ENCODE measurements at regions of chr15 and their contacts with region 1.

Region 1: GRCh38 chr15:64681424-64682024 is 93.9 kb downstream of the RBPMS2 start:
- DNase-seq: no peak
- ATAC-seq: peak; percentile 46
- H3K4me3 ChIP-seq: no peak overlapping the region
- H3K4me3 Mint-ChIP-seq: peak overlapping the region in 1 of 10 donors; percentile 53
- H3K27ac ChIP-seq: no peak overlapping the region
- H3K27ac Mint-ChIP-seq: peak overlapping the region in 6 of 9 donors; percentile 34 to 78 (median 61)
- H3K4me1 ChIP-seq: no peaks in the 10 kb centered on the region
- H3K4me1 Mint-ChIP-seq: peaks cover 0 to 31% (median 4%) of the 10 kb centered on the region in 7 donors
- H3K27me3 ChIP-seq: no peaks in the 10 kb centered on the region
- H3K27me3 Mint-ChIP-seq: no peaks in the 10 kb centered on the region

Region 2: GRCh38 chr15:64209680-64210334 is 471.7 kb before region 1 on chr15:
- CTCF ChIA-PET with region 1: no interaction called
- POLR2A ChIA-PET with region 1: no interaction called
- intact Hi-C with region 1: loop called (anchors 2 to 10 kb)
- DNase-seq: peak in 3 of 9 donors; percentile 0 to 19 (median 11)
- ATAC-seq: no peak
- H3K4me3 ChIP-seq: no peak overlapping the region
- H3K4me3 Mint-ChIP-seq: no peak overlapping the region
- H3K27ac ChIP-seq: no peak overlapping the region
- H3K27ac Mint-ChIP-seq: peak overlapping the region in 1 of 9 donors; percentile 41
- H3K4me1 ChIP-seq: no peaks in the 10 kb centered on the region
- H3K4me1 Mint-ChIP-seq: peaks cover 0 to 10% (median 0%) of the 10 kb centered on the region in 7 donors
- H3K27me3 ChIP-seq: no peaks in the 10 kb centered on the region
- H3K27me3 Mint-ChIP-seq: no peaks in the 10 kb centered on the region

Region 3: DNA sequence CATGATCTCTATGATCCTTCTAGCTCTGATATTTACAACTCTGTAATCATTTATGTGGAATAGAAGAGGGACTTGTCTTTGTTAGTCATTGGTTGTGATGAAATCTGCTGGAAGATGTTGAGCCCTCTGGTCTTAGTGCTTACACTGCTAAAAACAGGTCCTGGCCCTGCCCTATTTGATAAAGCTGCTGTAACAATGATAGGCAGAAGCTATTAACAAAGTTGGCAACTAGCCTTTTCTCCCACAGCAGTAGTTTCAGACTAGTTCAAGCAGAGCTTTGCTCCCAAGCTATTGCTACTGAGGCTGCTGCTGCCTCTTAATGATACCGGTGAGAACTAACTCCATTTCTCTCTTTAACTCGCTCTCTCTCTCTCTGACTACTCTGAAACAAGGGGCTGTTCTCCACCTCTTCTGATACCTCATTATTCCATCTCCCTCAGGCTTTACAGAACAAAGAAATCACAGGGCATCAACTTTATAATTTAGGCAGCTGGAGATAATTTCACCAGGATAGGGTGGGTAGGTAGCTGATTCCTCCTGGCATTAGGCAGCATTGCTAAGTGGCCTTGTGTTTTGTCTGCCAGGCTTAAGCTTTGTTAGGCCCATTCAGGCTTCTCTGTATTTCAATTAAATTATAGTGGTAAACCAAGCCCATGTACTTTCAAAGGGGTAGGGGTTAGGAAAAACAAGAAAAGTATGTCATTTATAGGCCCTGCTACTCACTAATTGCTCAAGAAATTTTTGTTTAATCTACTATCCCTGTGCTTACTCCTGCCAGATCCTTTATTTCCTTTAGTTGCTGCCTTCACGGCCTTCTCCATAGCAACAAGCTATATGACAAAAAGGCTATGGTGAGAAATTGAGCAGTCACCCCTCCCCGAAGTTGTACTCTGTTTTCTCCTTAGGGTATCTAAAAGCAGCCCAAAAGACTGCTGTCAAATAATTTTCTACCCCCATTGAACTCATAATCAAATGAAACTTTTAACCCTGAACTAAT is 45.7 kb before region 1 on chr15:
- CTCF ChIA-PET with region 1: no interaction called
- POLR2A ChIA-PET with region 1: no interaction called
- intact Hi-C with region 1: no loop called
- DNase-seq: no peak
- ATAC-seq: peak; percentile 25
- H3K4me3 ChIP-seq: no peak overlapping the region
- H3K4me3 Mint-ChIP-seq: peak overlapping the region; percentile 8 to 73 (median 52)
- H3K27ac ChIP-seq: peak overlapping the region; percentile 15
- H3K27ac Mint-ChIP-seq: peak overlapping the region; percentile 13 to 86 (median 82)
- H3K4me1 ChIP-seq: peaks cover 55 to 59% of the 10 kb centered on the region in 2 donors
- H3K4me1 Mint-ChIP-seq: peaks cover 55 to 86% (median 72%) of the 10 kb centered on the region in 7 donors
- H3K27me3 ChIP-seq: no peaks in the 10 kb centered on the region
- H3K27me3 Mint-ChIP-seq: no peaks in the 10 kb centered on the region

Region 4: GRCh38 chr15:64667736-64668161 is 13.8 kb before region 1 on chr15:
- CTCF ChIA-PET with region 1: interaction called, 5 read pairs
- POLR2A ChIA-PET with region 1: no interaction called
- intact Hi-C with region 1: loop called in 1 of 2 experiments (anchors 1 kb)
- DNase-seq: no peak
- ATAC-seq: no peak
- H3K4me3 ChIP-seq: no peak overlapping the region
- H3K4me3 Mint-ChIP-seq: no peak overlapping the region
- H3K27ac ChIP-seq: no peak overlapping the region
- H3K27ac Mint-ChIP-seq: peak overlapping the region in 8 of 9 donors; percentile 12 to 84 (median 67)
- H3K4me1 ChIP-seq: no peaks in the 10 kb centered on the region
- H3K4me1 Mint-ChIP-seq: peaks cover 8 to 36% (median 22%) of the 10 kb centered on the region in 7 donors
- H3K27me3 ChIP-seq: no peaks in the 10 kb centered on the region
- H3K27me3 Mint-ChIP-seq: no peaks in the 10 kb centered on the region

Region 5: DNA sequence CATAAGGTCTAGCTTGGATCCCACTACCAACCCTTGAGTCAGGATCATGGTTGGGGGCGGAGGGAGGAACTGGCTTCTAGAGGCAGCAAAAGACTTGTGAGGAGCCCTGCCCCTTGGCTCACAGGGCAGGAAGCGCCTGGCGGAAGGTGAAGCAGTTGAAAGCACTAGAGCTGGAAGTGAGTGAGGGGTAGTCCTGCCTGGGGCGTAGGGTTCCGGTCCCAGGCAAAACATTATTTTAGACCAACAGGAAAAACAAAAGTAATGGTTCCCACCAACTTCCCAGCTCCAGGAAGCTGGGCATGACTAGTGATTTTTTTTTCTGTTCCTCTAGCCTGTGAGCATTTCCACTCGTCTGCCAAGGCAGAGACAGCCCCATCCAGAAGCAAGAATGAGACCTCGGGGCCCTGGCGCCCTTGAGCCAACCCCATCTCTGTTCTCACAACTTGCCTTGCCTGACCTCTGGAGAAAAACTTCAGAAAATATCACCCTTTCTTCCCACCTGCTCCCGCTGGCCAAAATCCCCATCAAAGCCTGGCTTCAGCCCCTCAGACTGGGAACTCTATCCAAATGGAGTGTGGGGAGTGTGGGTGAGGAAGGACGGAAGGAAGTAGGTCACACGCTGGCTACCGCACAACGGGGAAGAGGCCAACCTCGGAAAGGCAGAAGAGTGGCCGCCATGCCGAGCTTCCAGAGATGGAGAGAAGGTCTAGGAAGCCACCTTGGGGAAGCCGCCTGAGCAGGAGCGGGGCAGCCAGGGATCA is 36.4 kb after region 1 on chr15:
- CTCF ChIA-PET with region 1: interaction called, 19 read pairs
- POLR2A ChIA-PET with region 1: interaction called, 3 read pairs
- intact Hi-C with region 1: no loop called
- DNase-seq: peak in 6 of 9 donors; percentile 20 to 54 (median 36)
- ATAC-seq: peak; percentile 60
- H3K4me3 ChIP-seq: no peak overlapping the region
- H3K4me3 Mint-ChIP-seq: peak overlapping the region in 9 of 10 donors; percentile 3 to 65 (median 45)
- H3K27ac ChIP-seq: peak overlapping the region; percentile 55
- H3K27ac Mint-ChIP-seq: peak overlapping the region in 8 of 9 donors; percentile 81 to 92 (median 88)
- H3K4me1 ChIP-seq: peaks cover 0 to 21% of the 10 kb centered on the region in 2 donors
- H3K4me1 Mint-ChIP-seq: peaks cover 6 to 31% (median 18%) of the 10 kb centered on the region in 7 donors
- H3K27me3 ChIP-seq: no peaks in the 10 kb centered on the region
- H3K27me3 Mint-ChIP-seq: no peaks in the 10 kb centered on the region

Region 6: DNA sequence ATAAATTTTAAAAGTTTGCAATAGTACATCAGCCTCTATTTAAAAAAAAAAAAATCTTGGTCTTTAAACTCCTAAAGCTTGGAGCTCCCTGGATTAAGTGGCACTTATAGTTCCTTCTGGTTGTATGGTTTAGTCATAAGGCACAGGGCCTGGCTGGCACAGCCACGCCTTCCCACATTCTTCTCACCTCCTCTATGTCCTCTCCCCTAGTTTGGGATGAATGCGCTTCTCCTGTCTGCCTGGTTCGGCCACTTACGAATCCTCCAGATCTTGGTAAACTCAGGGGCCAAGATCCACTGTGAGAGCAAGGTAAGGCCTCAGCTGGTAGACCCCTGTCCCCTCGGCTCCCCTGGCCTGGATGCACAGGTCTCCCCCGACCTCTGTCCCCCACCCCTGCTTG is 240.2 kb after region 1 on chr15:
- CTCF ChIA-PET with region 1: no interaction called
- POLR2A ChIA-PET with region 1: no interaction called
- intact Hi-C with region 1: no loop called
- DNase-seq: no peak
- ATAC-seq: no peak
- H3K4me3 ChIP-seq: no peak overlapping the region
- H3K4me3 Mint-ChIP-seq: no peak overlapping the region
- H3K27ac ChIP-seq: no peak overlapping the region
- H3K27ac Mint-ChIP-seq: no peak overlapping the region
- H3K4me1 ChIP-seq: no peaks in the 10 kb centered on the region
- H3K4me1 Mint-ChIP-seq: peaks cover 0 to 5% (median 0%) of the 10 kb centered on the region in 7 donors
- H3K27me3 ChIP-seq: no peaks in the 10 kb centered on the region
- H3K27me3 Mint-ChIP-seq: peaks cover 0 to 5% (median 0%) of the 10 kb centered on the region in 5 donors

Measured in naive thymus-derived CD4-positive, alpha-beta T cell (primary cell).